Heart left ventricle (tissue), 16 donors: ENCODE measurements at regions of chr6 and their contacts with region 1.

Region 1: DNA sequence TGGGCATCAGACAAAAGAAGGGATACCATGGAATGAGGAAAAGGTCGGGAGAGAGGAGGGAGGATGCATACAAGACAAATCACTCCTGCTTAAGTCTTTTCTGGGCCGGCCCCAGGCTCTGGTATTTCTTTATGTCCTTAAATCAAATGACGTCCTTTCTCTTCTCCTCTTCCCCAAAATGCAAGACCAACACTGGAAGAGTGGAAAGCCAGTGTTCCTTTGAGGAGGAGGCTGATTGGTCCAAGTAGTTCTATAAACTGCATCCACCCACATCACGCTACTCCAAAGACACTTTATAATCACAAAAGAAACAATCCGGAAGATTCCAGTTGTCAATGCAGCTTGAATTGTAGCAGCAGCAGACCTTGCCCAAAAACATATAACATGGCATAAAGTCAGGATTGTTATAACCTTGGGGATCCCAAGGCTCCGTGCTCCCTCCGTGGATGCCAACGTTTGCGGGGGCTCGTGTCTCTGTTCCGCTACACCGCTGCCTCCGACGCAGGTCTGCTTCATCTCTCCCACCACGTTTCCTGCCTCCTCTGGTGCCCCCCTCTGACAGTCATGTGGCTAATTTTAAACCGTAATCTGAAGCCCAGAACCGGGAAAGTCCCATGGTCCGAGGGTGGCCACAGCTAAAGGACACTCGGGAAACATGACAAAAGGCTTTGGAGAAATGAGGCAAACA is 47.1 kb downstream of the MCUR1 start:
- DNase-seq: peak in 4 of 5 donors; percentile 63 to 72 (median 66)
- ATAC-seq: peak; percentile 83 to 96 (median 92)
- H3K4me3 ChIP-seq: peak overlapping the region in 10 of 12 donors; percentile 4 to 54 (median 44)
- H3K27ac ChIP-seq: peak overlapping the region in 10 of 12 donors; percentile 4 to 79 (median 43)
- H3K4me1 ChIP-seq: peaks cover 0 to 29% (median 13%) of the 10 kb centered on the region in 12 donors
- H3K27me3 ChIP-seq: no peaks in the 10 kb centered on the region
- CTCF ChIP-seq: peak in 7 of 12 donors; percentile 22 to 47 (median 30)
- POLR2A ChIP-seq: no peak

Region 2: GRCh38 chr6:13614926-13615798 is 152.1 kb before region 1 on chr6 and contains the start of gene NOL7:
- intact Hi-C with region 1: loop called in 1 of 10 experiments (anchors 10 kb)
- DNase-seq: peak; percentile 98 to 99 (median 98)
- ATAC-seq: peak; percentile 96 to 98 (median 96)
- H3K4me3 ChIP-seq: peak within 1 kb of the TSS; percentile 66 to 96 (median 83)
- H3K27ac ChIP-seq: peak within 1 kb of the TSS; percentile 75 to 94 (median 89)
- H3K4me1 ChIP-seq: peaks cover 3 to 48% (median 27%) of the 10 kb centered on the region in 12 donors
- H3K27me3 ChIP-seq: no peaks in the 10 kb centered on the region
- CTCF ChIP-seq: peak; percentile 83 to 99 (median 92)
- POLR2A ChIP-seq: peak in 1 of 2 donors; percentile 72
- total RNA-seq, gene NOL7: 38.6 to 118 (median 47.8) TPM

Region 3: GRCh38 chr6:13635948-13636658 is 131.2 kb before region 1 on chr6:
- intact Hi-C with region 1: loop called in 2 of 10 experiments (anchors 10 kb)
- DNase-seq: no peak
- ATAC-seq: peak in 1 of 4 donors; percentile 69
- H3K4me3 ChIP-seq: no peak overlapping the region
- H3K27ac ChIP-seq: peak overlapping the region in 1 of 12 donors; percentile 39
- H3K4me1 ChIP-seq: peaks cover 0 to 25% (median 0%) of the 10 kb centered on the region in 12 donors
- H3K27me3 ChIP-seq: no peaks in the 10 kb centered on the region
- CTCF ChIP-seq: no peak
- POLR2A ChIP-seq: no peak

Region 4: DNA sequence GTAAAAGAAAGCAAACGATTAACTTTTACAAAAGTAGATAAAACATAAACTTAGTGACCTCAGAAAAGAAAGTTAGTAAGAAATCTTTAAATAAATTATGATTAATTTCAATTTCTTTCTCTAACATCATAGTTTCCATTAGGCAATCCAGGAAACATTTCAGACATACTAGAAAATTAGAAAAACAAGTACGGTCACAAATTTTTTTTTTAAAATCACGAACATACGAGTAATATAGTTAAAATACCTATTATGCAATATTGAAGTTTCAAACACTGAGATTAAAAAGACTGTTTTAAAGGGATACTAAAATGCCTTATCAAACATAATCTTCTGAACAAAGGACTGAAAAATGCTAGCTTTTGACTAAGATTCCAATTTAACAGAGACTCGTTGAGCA is 126.0 kb before region 1 on chr6:
- intact Hi-C with region 1: loop called in 2 of 10 experiments (anchors 10 kb)
- DNase-seq: no peak
- ATAC-seq: no peak
- H3K4me3 ChIP-seq: no peak overlapping the region
- H3K27ac ChIP-seq: no peak overlapping the region
- H3K4me1 ChIP-seq: peaks cover 0 to 9% (median 0%) of the 10 kb centered on the region in 12 donors
- H3K27me3 ChIP-seq: no peaks in the 10 kb centered on the region
- CTCF ChIP-seq: no peak
- POLR2A ChIP-seq: no peak

Region 5: GRCh38 chr6:13754644-13755043 is 12.6 kb before region 1 on chr6:
- intact Hi-C with region 1: no loop called
- DNase-seq: no peak
- ATAC-seq: no peak
- H3K4me3 ChIP-seq: no peak overlapping the region
- H3K27ac ChIP-seq: no peak overlapping the region
- H3K4me1 ChIP-seq: peaks cover 0 to 6% (median 0%) of the 10 kb centered on the region in 12 donors
- H3K27me3 ChIP-seq: no peaks in the 10 kb centered on the region
- CTCF ChIP-seq: no peak
- POLR2A ChIP-seq: no peak